ENCODE measurements at regions of chr15 and their contacts with region 1.

Region 1: DNA sequence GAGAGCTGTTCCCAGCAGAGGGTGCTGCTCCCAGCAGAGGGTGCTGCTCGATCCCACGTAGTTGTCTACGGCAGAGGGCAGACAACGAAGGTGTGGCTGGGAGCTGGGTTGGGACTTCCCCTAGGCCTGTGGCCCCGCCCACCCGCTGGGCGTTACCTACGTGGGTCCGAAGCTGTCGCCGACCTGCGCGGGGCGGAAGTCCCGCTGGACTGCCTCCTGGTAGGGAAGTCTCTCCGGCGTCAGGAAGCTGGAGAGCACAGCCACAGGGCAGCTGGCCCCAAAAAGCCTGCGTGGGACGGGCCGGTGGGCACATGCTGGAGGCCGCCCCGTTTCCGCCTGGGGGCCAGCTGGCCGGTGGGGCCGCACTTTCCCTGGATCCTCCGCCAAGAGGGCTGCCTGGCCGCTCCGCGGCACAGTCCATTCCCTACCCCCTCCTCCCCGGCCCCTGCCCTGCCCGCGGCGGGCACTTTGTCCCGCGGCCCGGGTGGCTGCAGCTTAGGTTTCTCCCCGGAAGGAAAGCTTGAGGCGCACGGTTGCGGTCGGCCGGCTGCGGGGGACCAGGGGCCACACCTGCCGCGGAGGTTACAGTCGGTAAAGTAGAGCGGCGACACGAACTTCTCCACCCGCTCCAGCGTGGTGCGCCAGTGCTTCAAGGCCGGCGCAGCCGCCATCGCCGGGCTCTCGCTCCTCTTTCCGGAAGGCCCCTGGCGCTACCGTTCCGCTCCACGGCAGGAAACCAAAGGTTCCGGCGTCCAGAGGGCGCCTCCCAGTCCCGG is at the start of gene MAN2C1:
- DNase-seq: peak; percentile 85 to 97
- ATAC-seq: peak; percentile 92 to 95 (median 92)
- H3K4me3 ChIP-seq: peak within 1 kb of the TSS; percentile 57
- H3K4me3 Mint-ChIP-seq: peak within 1 kb of the TSS; percentile 89
- H3K27ac ChIP-seq: peak within 1 kb of the TSS; percentile 93
- H3K27ac Mint-ChIP-seq: peak within 1 kb of the TSS; percentile 90 to 92
- H3K4me1 ChIP-seq: peaks cover 16% of the 10 kb centered on the region
- H3K4me1 Mint-ChIP-seq: peaks cover 14 to 21% of the 10 kb centered on the region in 2 donors
- H3K27me3 ChIP-seq: no peaks in the 10 kb centered on the region
- H3K27me3 Mint-ChIP-seq: no peaks in the 10 kb centered on the region
- CTCF ChIP-seq: peak; percentile 14
- total RNA-seq, gene MAN2C1: 375 to 476 (median 385) TPM

Region 2: GRCh38 chr15:75335705-75336355 is 32.3 kb before region 1 on chr15 and contains the start of gene COMMD4:
- intact Hi-C with region 1: loop called (anchors 2 kb)
- DNase-seq: peak; percentile 60 to 82
- ATAC-seq: peak; percentile 37 to 46 (median 40)
- H3K4me3 ChIP-seq: peak within 1 kb of the TSS; percentile 80
- H3K4me3 Mint-ChIP-seq: peak within 1 kb of the TSS; percentile 97
- H3K27ac ChIP-seq: peak within 1 kb of the TSS; percentile 29
- H3K27ac Mint-ChIP-seq: peak within 1 kb of the TSS; percentile 88 to 90
- H3K4me1 ChIP-seq: peaks cover 29% of the 10 kb centered on the region
- H3K4me1 Mint-ChIP-seq: peaks cover 25 to 46% of the 10 kb centered on the region in 2 donors
- H3K27me3 ChIP-seq: no peaks in the 10 kb centered on the region
- H3K27me3 Mint-ChIP-seq: no peaks in the 10 kb centered on the region
- CTCF ChIP-seq: no peak
- total RNA-seq, gene COMMD4: 38.8 to 56.3 (median 46.8) TPM

Region 3: GRCh38 chr15:75389791-75390382 is 21.8 kb after region 1 on chr15:
- intact Hi-C with region 1: no loop called
- DNase-seq: no peak
- ATAC-seq: no peak
- H3K4me3 ChIP-seq: no peak overlapping the region
- H3K4me3 Mint-ChIP-seq: no peak overlapping the region
- H3K27ac ChIP-seq: no peak overlapping the region
- H3K27ac Mint-ChIP-seq: no peak overlapping the region
- H3K4me1 ChIP-seq: peaks cover 5% of the 10 kb centered on the region
- H3K4me1 Mint-ChIP-seq: peaks cover 5 to 11% of the 10 kb centered on the region in 2 donors
- H3K27me3 ChIP-seq: no peaks in the 10 kb centered on the region
- H3K27me3 Mint-ChIP-seq: no peaks in the 10 kb centered on the region
- CTCF ChIP-seq: no peak

Measured in natural killer cell (primary cell).